ENCODE measurements at regions of chr12 and their contacts with region 1.

Region 1: GRCh38 chr12:106136263-106136662 is 2.5 kb downstream of the NUAK1 start:
- DNase-seq: peak; percentile 77
- H3K4me3 ChIP-seq: peak overlapping the region; percentile 11 to 77 (median 24)
- H3K27ac ChIP-seq: peak overlapping the region; percentile 69
- H3K4me1 ChIP-seq: peaks cover 64% of the 10 kb centered on the region
- H3K27me3 ChIP-seq: no peaks in the 10 kb centered on the region
- CTCF ChIP-seq: peak; percentile 59 to 77

Region 2: DNA sequence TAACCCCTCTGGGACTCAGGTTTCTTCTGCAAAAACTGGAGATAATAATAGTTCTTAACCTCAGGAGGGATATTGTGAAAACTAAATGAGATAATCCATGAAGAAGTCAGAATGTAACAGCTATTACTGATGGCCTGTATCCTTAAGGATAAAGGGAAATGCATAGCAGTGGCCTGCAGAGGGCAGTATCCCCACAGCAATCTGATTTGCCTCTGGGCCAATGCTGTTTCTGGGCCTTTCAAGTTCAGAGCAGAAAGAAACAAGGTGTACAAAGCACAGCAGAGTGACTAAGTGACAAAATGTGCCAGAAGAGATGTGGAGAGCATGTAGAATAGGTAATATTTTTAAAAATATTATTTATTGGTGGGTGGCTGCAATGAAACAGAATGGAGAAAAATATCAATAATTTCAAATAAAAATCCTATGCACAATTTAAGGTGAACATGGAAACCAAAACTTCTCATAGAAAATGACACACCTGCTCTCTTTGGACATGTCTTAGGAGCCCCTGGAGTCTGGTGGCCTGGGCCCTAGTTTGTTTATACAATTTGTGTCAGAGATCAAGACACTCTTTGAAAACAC is 715.5 kb before region 1 on chr12:
- CTCF ChIA-PET with region 1: interaction called, 6 read pairs
- dilution Hi-C with region 1: no loop called
- in situ Hi-C with region 1: loop called (anchors 5 kb)
- intact Hi-C with region 1: loop called (anchors 1 kb)
- DNase-seq: peak; percentile 63
- H3K4me3 ChIP-seq: no peak overlapping the region
- H3K27ac ChIP-seq: no peak overlapping the region
- H3K4me1 ChIP-seq: peaks cover 19% of the 10 kb centered on the region
- H3K27me3 ChIP-seq: no peaks in the 10 kb centered on the region
- CTCF ChIP-seq: peak; percentile 90 to 95

Region 3: DNA sequence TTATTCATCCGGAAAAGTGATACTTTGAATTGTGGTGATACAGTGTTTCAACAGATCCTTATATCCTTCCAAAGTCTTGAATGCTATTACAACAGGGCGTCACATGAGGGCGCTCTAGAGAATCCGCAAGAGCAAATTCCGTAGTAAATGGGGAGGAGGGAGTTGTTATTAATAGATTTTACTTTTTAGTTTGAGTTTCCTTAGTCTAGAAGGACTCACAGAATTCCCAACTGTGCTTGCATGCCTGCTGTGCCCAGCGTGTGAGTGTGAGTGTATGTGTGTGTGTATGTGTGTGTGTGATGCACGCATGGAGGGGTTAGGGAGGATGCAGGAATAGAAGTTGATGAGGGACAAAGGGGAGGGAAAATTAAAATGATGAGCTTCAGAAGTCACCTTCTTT is 430.5 kb before region 1 on chr12:
- CTCF ChIA-PET with region 1: interaction called, 5 read pairs
- dilution Hi-C with region 1: no loop called
- in situ Hi-C with region 1: loop called (anchors 5 to 10 kb)
- intact Hi-C with region 1: loop called (anchors 1 kb)
- DNase-seq: peak; percentile 30
- H3K4me3 ChIP-seq: no peak overlapping the region
- H3K27ac ChIP-seq: no peak overlapping the region
- H3K4me1 ChIP-seq: peaks cover 8% of the 10 kb centered on the region
- H3K27me3 ChIP-seq: no peaks in the 10 kb centered on the region
- CTCF ChIP-seq: peak; percentile 74 to 80

Region 4: DNA sequence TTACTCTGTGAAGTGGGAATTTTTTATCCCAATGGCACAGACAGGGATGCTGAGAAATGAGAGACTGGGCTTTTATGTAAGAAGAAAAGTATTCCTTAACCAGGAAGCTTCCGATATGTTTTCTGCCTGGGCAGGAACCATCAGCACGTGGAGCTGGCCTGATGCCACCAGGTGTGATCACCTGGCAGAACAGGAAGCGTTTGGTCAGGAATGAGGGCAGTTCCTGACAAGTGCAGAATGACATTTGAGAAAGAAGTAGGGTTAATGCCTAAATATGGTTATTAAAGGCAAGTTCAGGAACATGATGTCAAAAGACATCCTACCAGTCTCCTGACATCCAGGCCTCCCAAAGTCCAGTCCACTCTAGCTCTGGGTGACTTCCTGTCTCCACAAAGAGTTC is 207.8 kb before region 1 on chr12:
- CTCF ChIA-PET with region 1: no interaction called
- dilution Hi-C with region 1: no loop called
- in situ Hi-C with region 1: no loop called
- intact Hi-C with region 1: loop called (anchors 5 kb)
- DNase-seq: peak; percentile 83
- H3K4me3 ChIP-seq: no peak overlapping the region
- H3K27ac ChIP-seq: peak overlapping the region; percentile 17
- H3K4me1 ChIP-seq: peaks cover 29% of the 10 kb centered on the region
- H3K27me3 ChIP-seq: no peaks in the 10 kb centered on the region
- CTCF ChIP-seq: no peak

Region 5: GRCh38 chr12:106032141-106032925 is 103.9 kb before region 1 on chr12:
- CTCF ChIA-PET with region 1: interaction called, 5 read pairs
- dilution Hi-C with region 1: no loop called
- in situ Hi-C with region 1: no loop called
- intact Hi-C with region 1: loop called (anchors 1 kb)
- DNase-seq: peak; percentile 7
- H3K4me3 ChIP-seq: no peak overlapping the region
- H3K27ac ChIP-seq: no peak overlapping the region
- H3K4me1 ChIP-seq: no peaks in the 10 kb centered on the region
- H3K27me3 ChIP-seq: no peaks in the 10 kb centered on the region
- CTCF ChIP-seq: peak in 1 of 2 donors; percentile 40

Region 6: GRCh38 chr12:106097011-106097410 is 39.3 kb before region 1 on chr12:
- CTCF ChIA-PET with region 1: no interaction called
- dilution Hi-C with region 1: no loop called
- in situ Hi-C with region 1: no loop called
- intact Hi-C with region 1: no loop called
- DNase-seq: no peak
- H3K4me3 ChIP-seq: no peak overlapping the region
- H3K27ac ChIP-seq: no peak overlapping the region
- H3K4me1 ChIP-seq: no peaks in the 10 kb centered on the region
- H3K27me3 ChIP-seq: no peaks in the 10 kb centered on the region
- CTCF ChIP-seq: no peak

Region 7: GRCh38 chr12:106113042-106113441 is 23.2 kb before region 1 on chr12:
- CTCF ChIA-PET with region 1: interaction called, 6 read pairs
- dilution Hi-C with region 1: no loop called
- in situ Hi-C with region 1: no loop called
- intact Hi-C with region 1: loop called (anchors 1 kb)
- DNase-seq: peak; percentile 71
- H3K4me3 ChIP-seq: peak overlapping the region in 1 of 3 experiments; percentile 4
- H3K27ac ChIP-seq: peak overlapping the region; percentile 97
- H3K4me1 ChIP-seq: peaks cover 47% of the 10 kb centered on the region
- H3K27me3 ChIP-seq: no peaks in the 10 kb centered on the region
- CTCF ChIP-seq: no peak

Region 8: GRCh38 chr12:106211973-106212372 is 75.7 kb after region 1 on chr12:
- CTCF ChIA-PET with region 1: no interaction called
- dilution Hi-C with region 1: no loop called
- in situ Hi-C with region 1: no loop called
- intact Hi-C with region 1: no loop called
- DNase-seq: no peak
- H3K4me3 ChIP-seq: no peak overlapping the region
- H3K27ac ChIP-seq: no peak overlapping the region
- H3K4me1 ChIP-seq: no peaks in the 10 kb centered on the region
- H3K27me3 ChIP-seq: no peaks in the 10 kb centered on the region
- CTCF ChIP-seq: no peak

Region 9: GRCh38 chr12:106282457-106283097 is 146.3 kb after region 1 on chr12:
- CTCF ChIA-PET with region 1: no interaction called
- dilution Hi-C with region 1: no loop called
- in situ Hi-C with region 1: no loop called
- intact Hi-C with region 1: loop called (anchors 5 kb)
- DNase-seq: peak; percentile 63
- H3K4me3 ChIP-seq: no peak overlapping the region
- H3K27ac ChIP-seq: no peak overlapping the region
- H3K4me1 ChIP-seq: peaks cover 9% of the 10 kb centered on the region
- H3K27me3 ChIP-seq: no peaks in the 10 kb centered on the region
- CTCF ChIP-seq: peak; percentile 79 to 83

Region 10: DNA sequence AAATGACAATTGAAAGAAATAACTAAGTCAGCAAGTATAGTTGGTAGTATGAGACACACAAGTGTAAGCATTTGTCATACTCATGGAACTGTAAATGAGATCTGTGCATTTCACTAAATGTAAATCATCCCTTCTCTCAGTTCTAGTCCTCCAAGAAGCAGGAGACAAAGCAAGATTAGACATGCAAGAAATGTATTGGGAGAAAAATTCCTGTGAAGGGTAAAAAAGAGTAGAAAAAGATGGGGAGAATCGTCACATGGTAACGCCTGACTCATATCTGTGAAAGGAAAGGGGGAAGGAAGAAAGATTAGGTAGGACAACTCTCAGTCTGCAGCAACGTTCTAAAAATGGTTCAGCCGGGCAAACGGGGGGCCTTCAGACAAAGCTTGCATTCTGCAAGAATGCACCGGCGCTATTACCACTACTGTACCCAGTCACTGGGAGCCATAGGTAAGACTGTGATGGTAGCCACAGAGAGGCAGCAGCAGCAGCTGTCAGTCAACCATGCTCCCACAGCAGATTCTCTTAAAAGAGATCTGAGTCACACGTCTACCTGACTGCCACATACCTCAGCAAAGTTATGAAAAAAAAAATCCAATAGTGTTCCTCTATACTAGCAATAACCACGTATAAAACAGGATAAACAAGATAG is 428.5 kb after region 1 on chr12:
- CTCF ChIA-PET with region 1: no interaction called
- dilution Hi-C with region 1: no loop called
- in situ Hi-C with region 1: no loop called
- intact Hi-C with region 1: no loop called
- DNase-seq: peak; percentile 25
- H3K4me3 ChIP-seq: no peak overlapping the region
- H3K27ac ChIP-seq: no peak overlapping the region
- H3K4me1 ChIP-seq: peaks cover 6% of the 10 kb centered on the region
- H3K27me3 ChIP-seq: peaks cover 4% of the 10 kb centered on the region
- CTCF ChIP-seq: no peak